Vagina (tissue), 2 donors: ENCODE measurements at regions of chr20 and their contacts with region 1.

Region 1: GRCh38 chr20:31951530-31952453 is at the start of gene PDRG1:
- DNase-seq: peak in 1 of 2 donors; percentile 90
- H3K4me3 ChIP-seq: peak within 1 kb of the TSS; percentile 90 to 94
- H3K27ac ChIP-seq: peak within 1 kb of the TSS; percentile 23
- H3K4me1 ChIP-seq: peaks cover 22% of the 10 kb centered on the region
- H3K27me3 ChIP-seq: no peaks in the 10 kb centered on the region
- CTCF ChIP-seq: peak; percentile 87 to 97 (median 91)
- POLR2A ChIP-seq: no peak
- total RNA-seq, gene PDRG1: 5.9 TPM

Region 2: GRCh38 chr20:31835977-31836852 is 115.6 kb before region 1 on chr20:
- intact Hi-C with region 1: loop called (anchors 5 kb)
- DNase-seq: no peak
- H3K4me3 ChIP-seq: no peak overlapping the region
- H3K27ac ChIP-seq: peak overlapping the region; percentile 13
- H3K4me1 ChIP-seq: peaks cover 25% of the 10 kb centered on the region
- H3K27me3 ChIP-seq: no peaks in the 10 kb centered on the region
- CTCF ChIP-seq: no peak
- POLR2A ChIP-seq: no peak

Region 3: DNA sequence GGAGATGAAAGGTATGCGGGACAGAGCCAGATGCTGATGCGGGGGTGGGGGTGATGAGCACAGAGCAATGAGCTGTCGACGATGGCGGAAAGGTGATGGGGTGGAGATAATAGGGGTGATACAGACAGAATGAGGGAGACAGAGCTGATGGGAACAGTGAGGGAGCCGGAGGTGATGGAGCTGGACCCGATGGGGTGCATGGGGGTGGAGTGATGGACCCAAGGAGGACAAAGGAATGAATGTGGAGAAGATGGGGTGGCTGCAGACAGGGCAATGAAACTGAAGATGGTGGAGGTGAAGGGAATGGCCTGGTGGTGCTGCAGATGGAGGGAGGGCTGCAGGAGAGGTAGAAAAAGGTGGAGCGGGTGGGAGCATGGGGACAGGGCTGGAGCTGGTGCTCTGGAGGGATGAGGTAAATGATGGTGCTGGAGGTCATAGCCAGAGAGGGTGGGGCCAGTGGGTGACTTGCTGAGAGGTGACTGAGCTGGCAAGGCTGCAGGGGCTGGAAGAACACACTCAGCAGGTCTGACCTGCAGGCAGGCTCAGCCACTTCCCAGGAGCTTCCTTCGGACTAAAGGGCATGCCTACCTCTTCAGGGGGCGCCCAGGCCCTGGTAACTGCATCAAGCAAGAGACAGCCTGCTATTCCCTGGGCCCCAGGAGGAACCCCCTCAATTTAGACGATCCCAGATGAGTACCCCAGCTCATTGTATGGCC is 100.4 kb before region 1 on chr20:
- intact Hi-C with region 1: loop called (anchors 5 kb)
- DNase-seq: no peak
- H3K4me3 ChIP-seq: no peak overlapping the region
- H3K27ac ChIP-seq: no peak overlapping the region
- H3K4me1 ChIP-seq: peaks cover 12% of the 10 kb centered on the region
- H3K27me3 ChIP-seq: no peaks in the 10 kb centered on the region
- CTCF ChIP-seq: no peak
- POLR2A ChIP-seq: no peak